Activated naive CD4-positive, alpha-beta T cell treated with anti-CD3 and anti-CD28 coated beads for 36 hours (primary cell): ENCODE measurements at regions of chr2 and their contacts with region 1.

Region 1: GRCh38 chr2:38377050-38377828 is at the start of gene ATL2:
- DNase-seq: peak; percentile 96
- H3K4me3 Mint-ChIP-seq: peak within 1 kb of the TSS; percentile 90
- H3K27ac Mint-ChIP-seq: peak within 1 kb of the TSS; percentile 78
- H3K4me1 Mint-ChIP-seq: peaks cover 55% of the 10 kb centered on the region
- H3K27me3 Mint-ChIP-seq: no peaks in the 10 kb centered on the region
- total RNA-seq, gene ATL2: 54.6 to 55.9 TPM

Region 2: DNA sequence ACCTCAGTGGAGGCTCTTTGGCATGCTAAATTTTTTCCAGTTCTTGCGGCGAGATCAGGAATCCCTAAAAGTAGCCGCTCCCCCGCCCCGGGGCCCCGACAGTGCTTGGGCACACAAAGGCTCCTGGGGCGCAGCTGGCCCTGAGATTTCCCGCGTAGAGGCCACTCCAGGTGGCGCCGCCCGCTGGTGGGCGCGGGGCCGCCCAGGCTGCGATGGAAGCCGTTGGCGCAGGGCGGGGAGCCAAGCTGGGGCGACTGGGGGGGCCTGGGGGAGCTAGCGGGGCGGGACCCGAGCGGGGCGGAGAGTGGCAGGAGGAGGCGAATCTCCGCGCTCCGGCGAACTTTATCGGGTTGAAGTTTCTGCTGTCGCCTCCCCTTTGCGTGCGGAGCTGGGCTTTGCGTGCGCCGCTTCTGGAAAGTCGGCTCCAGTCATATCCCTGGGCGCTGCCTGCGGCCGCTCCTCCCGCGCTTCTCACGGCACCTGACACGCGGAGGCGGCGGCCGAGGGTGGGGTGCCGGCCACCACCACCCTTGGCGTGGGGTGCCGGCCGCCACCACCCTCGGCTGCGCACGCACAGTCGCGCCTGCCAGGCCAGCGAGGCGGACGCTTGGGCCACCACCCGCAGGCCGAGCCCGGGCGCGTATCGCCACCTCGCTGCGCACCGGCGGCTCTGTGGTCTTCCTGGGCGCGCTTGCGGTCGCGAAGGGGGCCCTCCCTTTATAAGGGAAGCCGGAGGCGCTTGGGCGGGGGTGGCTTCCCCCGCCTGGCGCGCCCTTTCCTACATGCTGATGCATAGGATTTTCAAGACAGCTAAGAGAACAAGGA is 300.4 kb before region 1 on chr2:
- CTCF ChIA-PET with region 1: no interaction called
- intact Hi-C with region 1: loop called (anchors 2 kb)
- DNase-seq: peak; percentile 81
- H3K4me3 Mint-ChIP-seq: peak overlapping the region; percentile 75
- H3K27ac Mint-ChIP-seq: peak overlapping the region; percentile 72
- H3K4me1 Mint-ChIP-seq: peaks cover 23% of the 10 kb centered on the region
- H3K27me3 Mint-ChIP-seq: peaks cover 46% of the 10 kb centered on the region

Region 3: GRCh38 chr2:38465789-38466127 is 88.5 kb after region 1 on chr2:
- CTCF ChIA-PET with region 1: interaction called, 4 read pairs
- intact Hi-C with region 1: loop called (anchors 1 kb)
- DNase-seq: peak; percentile 31
- H3K4me3 Mint-ChIP-seq: no peak overlapping the region
- H3K27ac Mint-ChIP-seq: no peak overlapping the region
- H3K4me1 Mint-ChIP-seq: peaks cover 9% of the 10 kb centered on the region
- H3K27me3 Mint-ChIP-seq: no peaks in the 10 kb centered on the region

Region 4: DNA sequence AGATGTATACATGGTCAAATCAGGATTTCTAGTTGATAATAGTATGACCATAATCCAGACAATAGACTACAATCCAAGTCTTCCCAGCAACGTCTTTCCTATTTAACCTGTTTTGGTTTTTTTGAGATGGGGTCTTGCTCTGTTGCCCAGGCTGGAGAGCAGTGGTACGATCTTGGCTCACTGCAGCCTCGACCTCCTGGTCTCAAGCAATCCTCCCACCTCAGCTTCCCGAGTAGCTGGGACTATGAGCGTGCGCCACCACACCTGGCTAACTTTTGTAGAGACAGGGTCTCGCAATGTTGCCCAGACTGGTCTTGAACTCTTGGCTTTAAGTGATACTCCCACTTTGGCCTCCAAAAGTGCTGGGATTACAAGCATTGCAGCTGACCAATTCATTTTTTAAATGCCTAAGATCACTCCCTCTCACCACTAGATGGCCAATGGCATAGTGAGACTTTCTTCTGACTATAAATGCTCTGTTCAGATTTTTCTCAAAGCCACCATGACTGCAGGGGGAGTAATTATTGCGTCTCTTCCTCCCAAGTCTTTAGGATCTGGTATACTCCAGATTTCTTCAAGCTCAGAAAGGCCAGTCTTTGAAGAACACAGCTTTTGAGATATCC is 177.8 kb after region 1 on chr2:
- CTCF ChIA-PET with region 1: no interaction called
- intact Hi-C with region 1: no loop called
- DNase-seq: no peak
- H3K4me3 Mint-ChIP-seq: no peak overlapping the region
- H3K27ac Mint-ChIP-seq: no peak overlapping the region
- H3K4me1 Mint-ChIP-seq: peaks cover 12% of the 10 kb centered on the region
- H3K27me3 Mint-ChIP-seq: no peaks in the 10 kb centered on the region

Region 5: GRCh38 chr2:38655441-38655840 is 278.2 kb after region 1 on chr2:
- CTCF ChIA-PET with region 1: no interaction called
- intact Hi-C with region 1: no loop called
- DNase-seq: no peak
- H3K4me3 Mint-ChIP-seq: no peak overlapping the region
- H3K27ac Mint-ChIP-seq: no peak overlapping the region
- H3K4me1 Mint-ChIP-seq: peaks cover 43% of the 10 kb centered on the region
- H3K27me3 Mint-ChIP-seq: no peaks in the 10 kb centered on the region

Region 6: GRCh38 chr2:38665854-38666555 is 288.8 kb after region 1 on chr2 and contains the start of gene GALM:
- CTCF ChIA-PET with region 1: no interaction called
- intact Hi-C with region 1: loop called (anchors 1 kb)
- DNase-seq: peak; percentile 68
- H3K4me3 Mint-ChIP-seq: peak within 1 kb of the TSS; percentile 83
- H3K27ac Mint-ChIP-seq: peak within 1 kb of the TSS; percentile 97
- H3K4me1 Mint-ChIP-seq: peaks cover 69% of the 10 kb centered on the region
- H3K27me3 Mint-ChIP-seq: no peaks in the 10 kb centered on the region
- total RNA-seq, gene GALM: 31.3 to 31.9 TPM

Region 7: GRCh38 chr2:38778687-38779082 is 401.4 kb after region 1 on chr2:
- CTCF ChIA-PET with region 1: no interaction called
- intact Hi-C with region 1: loop called (anchors 1 kb)
- DNase-seq: no peak
- H3K4me3 Mint-ChIP-seq: peak overlapping the region; percentile 95
- H3K27ac Mint-ChIP-seq: peak overlapping the region; percentile 89
- H3K4me1 Mint-ChIP-seq: peaks cover 11% of the 10 kb centered on the region
- H3K27me3 Mint-ChIP-seq: peaks cover 10% of the 10 kb centered on the region

Region 8: GRCh38 chr2:39436592-39437510 is 1059.6 kb after region 1 on chr2 and contains the start of gene MAP4K3:
- CTCF ChIA-PET with region 1: no interaction called
- intact Hi-C with region 1: loop called (anchors 10 kb)
- DNase-seq: peak; percentile 86
- H3K4me3 Mint-ChIP-seq: peak within 1 kb of the TSS; percentile 87
- H3K27ac Mint-ChIP-seq: peak within 1 kb of the TSS; percentile 83
- H3K4me1 Mint-ChIP-seq: peaks cover 66% of the 10 kb centered on the region
- H3K27me3 Mint-ChIP-seq: no peaks in the 10 kb centered on the region
- total RNA-seq, gene MAP4K3: 10.6 to 12.0 TPM